ENCODE measurements at regions of chr1 and their contacts with region 1.

Region 1: DNA sequence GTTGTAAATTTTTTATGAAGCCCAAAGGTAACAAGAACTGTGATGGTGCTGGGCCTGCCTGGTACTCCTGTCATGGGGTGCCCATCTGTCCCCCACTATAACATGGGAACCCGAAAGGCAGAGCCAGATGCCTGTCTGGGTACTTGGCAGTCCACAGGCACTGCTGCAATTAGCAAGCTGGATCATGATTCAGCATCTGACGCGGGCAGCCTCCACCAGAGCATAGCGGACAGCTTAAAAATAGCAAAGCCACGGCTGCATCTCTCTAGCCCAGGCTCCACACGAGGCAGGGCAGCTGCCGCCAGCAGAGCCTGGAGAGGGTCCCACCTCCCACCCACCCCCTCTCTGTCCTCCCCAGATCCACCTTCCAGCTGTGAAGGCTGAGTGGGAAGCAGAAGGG is 22.9 kb downstream of the SUSD4 start:
- DNase-seq: peak; percentile 58 to 69
- ATAC-seq: peak; percentile 80 to 96 (median 88)
- H3K4me3 ChIP-seq: no peak overlapping the region
- H3K27ac ChIP-seq: peak overlapping the region in 9 of 10 donors; percentile 9 to 82 (median 56)
- H3K4me1 ChIP-seq: peaks cover 0 to 64% (median 28%) of the 10 kb centered on the region in 9 donors
- H3K27me3 ChIP-seq: no peaks in the 10 kb centered on the region
- CTCF ChIP-seq: no peak

Region 2: GRCh38 chr1:223142795-223143536 is 198.2 kb before region 1 on chr1 and contains the start of gene TLR5:
- intact Hi-C with region 1: loop called in 3 of 10 experiments (anchors 10 kb)
- DNase-seq: peak; percentile 84 to 91
- ATAC-seq: peak; percentile 91 to 96 (median 94)
- H3K4me3 ChIP-seq: peak within 1 kb of the TSS; percentile 39 to 75 (median 70)
- H3K27ac ChIP-seq: peak within 1 kb of the TSS in 9 of 10 donors; percentile 5 to 81 (median 45)
- H3K4me1 ChIP-seq: peaks cover 0 to 48% (median 21%) of the 10 kb centered on the region in 9 donors
- H3K27me3 ChIP-seq: no peaks in the 10 kb centered on the region
- CTCF ChIP-seq: peak; percentile 21 to 83 (median 66)
- total RNA-seq, gene TLR5: 0.91 to 5.0 (median 1.5) TPM

Region 3: DNA sequence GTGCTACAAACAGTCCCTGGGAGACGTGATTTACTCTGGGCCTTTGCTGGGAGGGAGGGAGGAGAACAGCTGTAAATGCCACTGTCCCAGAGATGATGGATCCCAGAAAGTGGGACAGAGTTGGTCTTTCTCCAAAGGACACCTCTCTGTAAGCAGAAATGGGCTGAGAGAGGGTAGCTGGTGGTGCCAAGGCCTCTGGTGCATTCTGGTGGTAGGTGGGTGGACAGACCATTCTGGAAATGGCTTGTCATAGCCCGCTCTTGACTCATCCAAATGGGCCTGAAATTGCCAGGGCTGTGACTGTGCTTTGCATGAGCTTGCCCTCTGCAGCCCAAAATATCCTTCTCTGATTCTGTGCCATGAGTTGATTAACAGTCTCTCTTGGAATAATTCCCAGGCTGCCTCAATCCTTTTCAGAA is 88.2 kb after region 1 on chr1:
- intact Hi-C with region 1: loop called in 1 of 10 experiments (anchors 10 kb)
- DNase-seq: peak in 1 of 2 donors; percentile 42
- ATAC-seq: peak; percentile 67 to 97 (median 90)
- H3K4me3 ChIP-seq: no peak overlapping the region
- H3K27ac ChIP-seq: peak overlapping the region in 7 of 10 donors; percentile 26 to 75 (median 62)
- H3K4me1 ChIP-seq: peaks cover 0 to 21% (median 6%) of the 10 kb centered on the region in 9 donors
- H3K27me3 ChIP-seq: peaks cover 0 to 4% (median 0%) of the 10 kb centered on the region in 7 donors
- CTCF ChIP-seq: peak in 1 of 9 donors; percentile 14